ENCODE measurements at regions of chr6 and their contacts with region 1.

Region 1: DNA sequence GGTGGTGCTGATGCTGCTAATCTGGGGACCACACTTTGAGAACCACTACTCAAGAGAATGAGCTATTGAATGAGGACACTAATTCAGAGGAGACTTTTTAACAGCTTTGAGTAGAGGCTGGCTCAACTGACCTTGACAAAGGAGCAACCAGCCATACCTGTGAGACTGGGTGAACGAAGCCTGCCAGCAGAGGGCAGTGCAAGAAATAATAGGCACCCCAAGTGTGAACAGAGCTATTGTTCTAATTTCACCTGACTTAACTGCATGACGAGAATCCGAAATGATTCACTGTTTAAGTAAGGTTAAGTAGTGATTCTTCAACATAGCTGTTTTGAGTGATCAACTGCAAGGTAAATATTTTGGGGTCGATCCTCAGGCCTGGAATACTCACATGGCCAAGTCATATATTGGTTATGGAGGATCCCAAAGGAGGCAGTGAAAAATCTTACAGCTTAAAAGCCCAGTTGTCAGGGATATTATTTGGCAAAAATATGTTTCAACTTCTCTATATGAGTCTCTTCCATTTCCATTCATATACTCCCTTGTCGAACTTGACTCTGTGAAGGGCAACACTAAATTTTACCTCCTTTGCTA is 550.5 kb upstream of the MARCKS start:
- DNase-seq: peak; percentile 57
- ATAC-seq: peak; percentile 100
- H3K4me3 ChIP-seq: no peak overlapping the region
- H3K27ac ChIP-seq: no peak overlapping the region
- H3K4me1 ChIP-seq: no peaks in the 10 kb centered on the region
- H3K27me3 ChIP-seq: no peaks in the 10 kb centered on the region
- CTCF ChIP-seq: peak; percentile 79 to 83 (median 81)
- EP300 ChIP-seq: no peak
- POLR2A ChIP-seq: no peak
- RAD21 ChIP-seq: peak; percentile 81

Region 2: DNA sequence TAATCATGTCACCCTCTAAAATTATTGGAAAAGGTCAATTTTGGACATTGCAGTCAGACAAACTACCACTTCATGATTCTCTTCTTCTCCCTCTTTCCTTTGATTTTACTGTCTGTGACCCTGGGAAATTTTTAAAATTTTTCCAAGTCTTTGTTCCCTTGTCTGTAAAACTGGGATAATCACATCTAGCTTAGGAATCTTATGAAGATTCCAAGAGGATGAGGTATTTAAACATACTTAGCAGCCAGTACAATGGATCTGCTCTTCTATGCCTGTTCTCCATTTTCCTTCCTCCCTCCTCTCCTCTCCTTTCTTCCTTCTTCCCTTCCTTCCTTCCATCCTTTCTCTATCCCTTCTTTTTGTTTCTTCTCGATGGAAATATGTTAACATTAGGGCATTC is 101.1 kb before region 1 on chr6:
- CTCF ChIA-PET with region 1: no interaction called
- POLR2A ChIA-PET with region 1: no interaction called
- RAD21 ChIA-PET with region 1: no interaction called
- SMC1A ChIA-PET with region 1: no interaction called
- in situ Hi-C with region 1: no loop called
- intact Hi-C with region 1: no loop called
- DNase-seq: no peak
- ATAC-seq: no peak
- H3K4me3 ChIP-seq: no peak overlapping the region
- H3K27ac ChIP-seq: no peak overlapping the region
- H3K4me1 ChIP-seq: no peaks in the 10 kb centered on the region
- H3K27me3 ChIP-seq: no peaks in the 10 kb centered on the region
- CTCF ChIP-seq: no peak
- EP300 ChIP-seq: no peak
- POLR2A ChIP-seq: no peak
- RAD21 ChIP-seq: no peak

Region 3: GRCh38 chr6:113287396-113287795 is 19.3 kb before region 1 on chr6:
- CTCF ChIA-PET with region 1: interaction called, 17 read pairs
- POLR2A ChIA-PET with region 1: no interaction called
- RAD21 ChIA-PET with region 1: interaction called, 14 read pairs
- SMC1A ChIA-PET with region 1: interaction called, 7 read pairs
- in situ Hi-C with region 1: no loop called
- intact Hi-C with region 1: no loop called
- DNase-seq: peak; percentile 37
- ATAC-seq: peak; percentile 96
- H3K4me3 ChIP-seq: no peak overlapping the region
- H3K27ac ChIP-seq: no peak overlapping the region
- H3K4me1 ChIP-seq: no peaks in the 10 kb centered on the region
- H3K27me3 ChIP-seq: no peaks in the 10 kb centered on the region
- CTCF ChIP-seq: no peak
- EP300 ChIP-seq: 0 out of 4 replicates have a peak, but pooled peaks of 1 of the 2 experiments have one; percentile 20
- POLR2A ChIP-seq: no peak
- RAD21 ChIP-seq: no peak

Region 4: DNA sequence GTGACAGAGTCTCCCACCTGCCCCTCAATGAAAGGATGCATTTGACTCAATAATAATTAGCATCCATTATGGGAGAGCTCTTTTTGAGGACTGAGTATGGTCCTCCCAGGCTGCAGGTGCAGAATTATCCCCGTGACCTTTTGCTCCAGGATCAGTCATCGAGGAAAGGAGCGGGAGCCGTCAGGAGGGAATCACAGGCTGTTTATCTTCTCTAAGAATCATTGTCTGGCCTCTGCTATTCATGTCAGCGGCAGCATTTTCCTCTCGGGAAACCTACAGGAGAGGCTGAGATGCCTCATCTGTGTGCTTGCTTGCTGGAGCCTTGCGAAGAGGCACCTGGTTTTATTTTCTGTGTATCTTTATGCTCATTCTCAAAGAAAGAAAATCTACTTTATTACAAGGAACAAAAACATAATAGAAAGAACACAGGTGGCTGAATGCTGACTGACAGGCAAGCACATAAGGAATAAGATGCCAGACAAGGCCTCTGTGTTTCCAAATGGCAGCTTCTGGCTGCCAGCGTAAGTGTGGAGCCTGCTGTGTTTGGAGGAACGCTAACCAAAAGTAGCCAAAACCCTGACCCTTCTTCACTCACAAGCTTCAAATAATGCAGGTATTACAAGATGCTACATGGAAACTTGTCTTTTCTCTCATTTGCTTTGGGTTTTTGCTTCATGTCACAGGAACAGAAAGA is 11.4 kb after region 1 on chr6:
- CTCF ChIA-PET with region 1: interaction called, 22 read pairs
- POLR2A ChIA-PET with region 1: no interaction called
- RAD21 ChIA-PET with region 1: interaction called, 8 read pairs
- SMC1A ChIA-PET with region 1: interaction called, 7 read pairs
- in situ Hi-C with region 1: no loop called
- intact Hi-C with region 1: no loop called
- DNase-seq: no peak
- ATAC-seq: no peak
- H3K4me3 ChIP-seq: no peak overlapping the region
- H3K27ac ChIP-seq: no peak overlapping the region
- H3K4me1 ChIP-seq: no peaks in the 10 kb centered on the region
- H3K27me3 ChIP-seq: no peaks in the 10 kb centered on the region
- CTCF ChIP-seq: no peak
- EP300 ChIP-seq: no peak
- POLR2A ChIP-seq: no peak
- RAD21 ChIP-seq: no peak

Region 5: DNA sequence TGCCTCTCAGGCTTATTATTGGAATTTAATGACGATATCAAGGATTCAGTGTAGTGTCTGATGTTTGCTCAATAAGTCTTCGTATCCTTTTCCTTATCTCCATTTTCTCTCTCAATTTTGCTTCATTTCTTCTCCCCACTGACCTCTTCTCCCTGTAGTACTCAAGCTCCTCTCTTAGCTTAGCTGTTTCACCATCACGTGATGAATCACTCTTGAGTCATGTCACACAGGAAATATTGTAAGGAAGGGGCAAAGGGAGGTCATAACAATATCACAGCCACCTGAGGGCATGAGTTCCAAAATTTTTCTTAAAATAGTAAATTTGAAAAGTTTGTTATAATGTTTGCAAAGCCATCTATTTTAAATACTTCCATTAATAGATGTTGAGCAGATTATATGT is 158.3 kb after region 1 on chr6:
- CTCF ChIA-PET with region 1: interaction called, 7 read pairs
- POLR2A ChIA-PET with region 1: no interaction called
- RAD21 ChIA-PET with region 1: interaction called, 4 read pairs
- SMC1A ChIA-PET with region 1: interaction called, 7 read pairs
- in situ Hi-C with region 1: no loop called
- intact Hi-C with region 1: loop called (anchors 5 kb)
- DNase-seq: no peak
- ATAC-seq: no peak
- H3K4me3 ChIP-seq: no peak overlapping the region
- H3K27ac ChIP-seq: no peak overlapping the region
- H3K4me1 ChIP-seq: no peaks in the 10 kb centered on the region
- H3K27me3 ChIP-seq: no peaks in the 10 kb centered on the region
- CTCF ChIP-seq: no peak
- EP300 ChIP-seq: no peak
- POLR2A ChIP-seq: no peak
- RAD21 ChIP-seq: no peak

Region 6: GRCh38 chr6:113642714-113643406 is 336.2 kb after region 1 on chr6:
- CTCF ChIA-PET with region 1: interaction called, 8 read pairs
- POLR2A ChIA-PET with region 1: no interaction called
- RAD21 ChIA-PET with region 1: interaction called, 8 read pairs
- SMC1A ChIA-PET with region 1: interaction called, 12 read pairs
- in situ Hi-C with region 1: no loop called
- intact Hi-C with region 1: no loop called
- DNase-seq: no peak
- ATAC-seq: peak; percentile 81
- H3K4me3 ChIP-seq: peak overlapping the region; percentile 28; the same call in 1 of the 2 replicates
- H3K27ac ChIP-seq: peak overlapping the region; percentile 89
- H3K4me1 ChIP-seq: peaks cover 39% of the 10 kb centered on the region
- H3K27me3 ChIP-seq: no peaks in the 10 kb centered on the region
- CTCF ChIP-seq: no peak
- EP300 ChIP-seq: peak; percentile 83 to 88; a peak in 3 of 4 replicates
- POLR2A ChIP-seq: 0 out of 2 replicates have a peak, but pooled peaks have one; percentile 43
- RAD21 ChIP-seq: peak; percentile 25; the same call in 1 of the 2 replicates

Region 7: DNA sequence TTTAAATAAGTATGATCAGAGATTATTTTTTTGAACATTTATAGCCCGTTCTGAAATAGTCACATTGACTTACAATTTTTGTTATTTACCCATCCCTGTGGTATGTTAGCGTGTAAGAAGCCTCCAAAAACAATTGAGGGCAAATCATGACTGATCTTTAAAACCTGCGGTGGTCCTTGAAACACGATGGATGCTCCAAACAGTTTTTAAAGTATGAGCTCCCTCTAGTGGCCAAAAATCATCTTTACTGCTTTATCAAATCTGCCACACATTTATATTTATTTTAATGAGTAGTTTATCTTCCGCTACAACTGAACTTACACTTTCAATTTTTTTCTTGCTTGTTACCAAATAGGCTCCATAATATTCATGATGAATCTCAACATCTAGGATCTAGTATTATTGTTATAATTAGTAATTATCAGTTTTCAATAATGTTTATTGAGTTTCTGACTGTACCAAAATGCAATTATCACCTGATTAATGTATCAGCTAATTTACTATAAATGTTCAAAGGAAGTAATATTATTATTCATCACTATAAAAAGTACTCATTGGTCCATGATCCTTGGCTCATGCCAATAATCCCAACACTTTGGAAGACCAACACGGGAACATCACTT is 602.7 kb after region 1 on chr6:
- CTCF ChIA-PET with region 1: interaction called, 27 read pairs
- POLR2A ChIA-PET with region 1: no interaction called
- RAD21 ChIA-PET with region 1: interaction called, 9 read pairs
- SMC1A ChIA-PET with region 1: interaction called, 28 read pairs
- in situ Hi-C with region 1: no loop called
- intact Hi-C with region 1: loop called (anchors 1 kb)
- DNase-seq: peak; percentile 7
- ATAC-seq: peak; percentile 84
- H3K4me3 ChIP-seq: no peak overlapping the region
- H3K27ac ChIP-seq: no peak overlapping the region
- H3K4me1 ChIP-seq: no peaks in the 10 kb centered on the region
- H3K27me3 ChIP-seq: no peaks in the 10 kb centered on the region
- CTCF ChIP-seq: peak; percentile 44 to 76 (median 50); a peak in 5 of 6 replicates
- EP300 ChIP-seq: no peak
- POLR2A ChIP-seq: no peak
- RAD21 ChIP-seq: peak; percentile 84

Measured in GM12878 (cell line).